Breast epithelium (tissue), 4 donors: ENCODE measurements at regions of chr1 and their contacts with region 1.

Region 1: GRCh38 chr1:48099072-48099773 is 102.0 kb upstream of the TRABD2B start:
- DNase-seq: no peak
- H3K4me3 ChIP-seq: no peak overlapping the region
- H3K27ac ChIP-seq: no peak overlapping the region
- H3K4me1 ChIP-seq: no peaks in the 10 kb centered on the region
- H3K27me3 ChIP-seq: no peaks in the 10 kb centered on the region
- CTCF ChIP-seq: no peak
- POLR2A ChIP-seq: no peak

Region 2: GRCh38 chr1:48139275-48139674 is 40.1 kb after region 1 on chr1:
- intact Hi-C with region 1: loop called (anchors 2 kb)
- DNase-seq: no peak
- H3K4me3 ChIP-seq: no peak overlapping the region
- H3K27ac ChIP-seq: no peak overlapping the region
- H3K4me1 ChIP-seq: no peaks in the 10 kb centered on the region
- H3K27me3 ChIP-seq: no peaks in the 10 kb centered on the region
- CTCF ChIP-seq: no peak
- POLR2A ChIP-seq: no peak